ENCODE measurements at regions of chr2 and their contacts with region 1.

Region 1: GRCh38 chr2:176024083-176024482 is 22.0 kb upstream of the LNPK start:
- DNase-seq: no peak
- H3K4me3 ChIP-seq: no peak overlapping the region
- H3K27ac ChIP-seq: no peak overlapping the region
- H3K4me1 ChIP-seq: no peaks in the 10 kb centered on the region
- H3K27me3 ChIP-seq: peaks cover 0 to 10% of the 10 kb centered on the region in 2 donors
- CTCF ChIP-seq: no peak

Region 2: GRCh38 chr2:176039375-176039774 is 15.3 kb after region 1 on chr2:
- intact Hi-C with region 1: no loop called
- DNase-seq: no peak
- H3K4me3 ChIP-seq: no peak overlapping the region
- H3K27ac ChIP-seq: no peak overlapping the region
- H3K4me1 ChIP-seq: no peaks in the 10 kb centered on the region
- H3K27me3 ChIP-seq: peaks cover 0 to 8% of the 10 kb centered on the region in 2 donors
- CTCF ChIP-seq: no peak

Region 3: GRCh38 chr2:176067589-176068418 is 43.7 kb after region 1 on chr2:
- intact Hi-C with region 1: loop called (anchors 5 kb)
- DNase-seq: no peak
- H3K4me3 ChIP-seq: peak overlapping the region; percentile 17 to 51
- H3K27ac ChIP-seq: no peak overlapping the region
- H3K4me1 ChIP-seq: peaks cover 0 to 23% (median 19%) of the 10 kb centered on the region in 4 donors
- H3K27me3 ChIP-seq: peaks cover 0 to 67% of the 10 kb centered on the region in 2 donors
- CTCF ChIP-seq: no peak

Region 4: GRCh38 chr2:176364273-176364977 is 340.3 kb after region 1 on chr2:
- intact Hi-C with region 1: no loop called
- DNase-seq: no peak
- H3K4me3 ChIP-seq: no peak overlapping the region
- H3K27ac ChIP-seq: no peak overlapping the region
- H3K4me1 ChIP-seq: no peaks in the 10 kb centered on the region
- H3K27me3 ChIP-seq: no peaks in the 10 kb centered on the region
- CTCF ChIP-seq: no peak

Region 5: DNA sequence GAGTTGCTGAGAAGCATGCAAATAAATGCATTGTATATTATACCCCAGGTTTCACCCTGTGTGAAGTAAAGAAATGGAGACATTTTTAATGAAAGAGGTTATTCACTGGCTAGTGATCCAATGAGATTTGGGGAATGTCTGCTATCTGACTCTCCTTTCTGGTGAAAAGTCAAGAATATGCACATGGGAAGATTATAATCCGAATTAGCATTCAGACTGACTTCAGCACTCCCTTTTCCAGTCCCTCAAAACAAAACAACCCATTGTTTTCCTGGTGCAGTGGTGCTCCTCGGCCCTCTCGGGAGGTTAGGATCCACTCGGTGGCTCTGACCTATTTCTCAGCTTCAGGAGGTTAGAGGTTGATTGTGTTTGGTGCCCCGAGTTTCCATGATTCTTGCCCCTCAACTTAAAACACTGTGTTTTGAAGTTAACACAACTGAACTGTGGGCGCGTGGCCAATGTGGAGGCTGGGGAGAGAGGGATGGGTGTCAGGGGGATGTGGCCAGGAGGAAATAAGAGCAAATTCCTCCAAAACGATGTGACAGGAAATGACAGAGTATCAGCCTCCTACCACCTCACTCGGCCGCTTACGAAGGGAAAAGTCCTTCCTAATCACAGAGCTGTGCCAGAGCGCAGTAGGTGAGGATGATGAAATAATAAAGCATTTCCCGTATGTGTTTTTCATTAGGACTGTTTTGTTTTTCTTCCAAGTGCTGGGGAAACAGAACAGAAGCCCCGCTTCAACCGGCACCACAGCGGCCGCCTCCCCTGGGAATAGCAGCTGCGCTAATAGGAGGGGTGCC is 685.3 kb after region 1 on chr2:
- intact Hi-C with region 1: no loop called
- DNase-seq: no peak
- H3K4me3 ChIP-seq: no peak overlapping the region
- H3K27ac ChIP-seq: no peak overlapping the region
- H3K4me1 ChIP-seq: peaks cover 0 to 10% (median 2%) of the 10 kb centered on the region in 4 donors
- H3K27me3 ChIP-seq: no peaks in the 10 kb centered on the region
- CTCF ChIP-seq: no peak